Panc1 (cell line): ENCODE measurements at regions of chr3 and their contacts with region 1.

Region 1: GRCh38 chr3:3264796-3265195 is 85.3 kb upstream of the CRBN start:
- DNase-seq: no peak
- ATAC-seq: no peak
- H3K4me3 ChIP-seq: no peak overlapping the region
- H3K27ac ChIP-seq: no peak overlapping the region
- H3K4me1 ChIP-seq: no peaks in the 10 kb centered on the region
- H3K27me3 ChIP-seq: no peaks in the 10 kb centered on the region
- CTCF ChIP-seq: no peak

Region 2: GRCh38 chr3:3334491-3334890 is 69.7 kb after region 1 on chr3:
- CTCF ChIA-PET with region 1: interaction called, 10 read pairs
- POLR2A ChIA-PET with region 1: no interaction called
- in situ Hi-C with region 1: no loop called
- intact Hi-C with region 1: no loop called
- DNase-seq: no peak
- ATAC-seq: no peak
- H3K4me3 ChIP-seq: no peak overlapping the region
- H3K27ac ChIP-seq: no peak overlapping the region
- H3K4me1 ChIP-seq: no peaks in the 10 kb centered on the region
- H3K27me3 ChIP-seq: no peaks in the 10 kb centered on the region
- CTCF ChIP-seq: no peak